ENCODE measurements at regions of chr15 and their contacts with region 1.

Region 1: DNA sequence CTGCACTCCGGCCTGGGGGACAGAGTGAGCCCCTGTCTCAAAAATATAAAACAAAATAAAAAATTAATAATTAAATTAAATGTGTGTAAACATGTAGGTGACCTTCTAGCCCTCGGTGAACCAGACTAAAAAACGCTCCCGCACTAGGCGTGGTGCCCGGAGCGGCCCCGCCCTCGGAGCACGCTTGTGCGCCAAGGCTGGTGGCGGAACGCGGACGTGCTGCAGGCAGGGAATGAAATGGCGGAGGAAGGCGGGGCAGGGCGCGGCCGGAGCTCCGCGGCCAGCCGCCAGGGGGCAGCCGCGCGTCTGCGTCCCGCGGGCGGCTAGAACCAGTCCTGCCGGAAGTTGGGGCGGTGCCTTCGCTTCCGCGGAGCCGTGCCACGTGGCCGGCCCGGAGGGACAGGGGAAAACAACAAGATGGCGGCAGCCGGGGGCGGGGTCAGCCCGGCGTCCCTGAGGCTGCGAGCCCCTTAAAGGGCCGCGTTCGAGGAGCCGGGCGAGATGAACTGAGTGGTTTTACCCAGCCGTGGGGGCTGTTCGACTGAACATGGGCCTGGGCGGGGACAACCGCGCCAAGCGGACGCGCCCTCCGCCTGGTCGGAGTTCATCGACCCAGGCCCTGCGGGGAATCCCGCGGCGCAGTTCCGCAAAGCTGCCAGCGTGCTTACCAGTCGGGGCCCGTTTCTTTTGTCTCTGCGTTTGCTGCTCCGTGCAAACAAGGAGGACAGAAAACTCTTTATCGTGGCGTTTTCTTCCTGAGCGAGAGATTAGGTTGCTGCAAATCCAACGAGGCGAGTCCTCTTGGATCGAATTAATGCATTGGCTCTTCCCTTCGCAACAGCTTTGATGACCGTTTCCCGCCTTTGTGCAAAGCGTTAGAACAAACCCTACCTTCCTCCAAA is 90.9 kb upstream of the CHD2 start:
- H3K4me3 ChIP-seq: peak overlapping the region; percentile 48
- H3K27ac ChIP-seq: peak overlapping the region; percentile 97
- H3K4me1 ChIP-seq: peaks cover 28% of the 10 kb centered on the region
- CTCF ChIP-seq: peak; percentile 93; the same call in 1 of the 2 replicates

Region 2: DNA sequence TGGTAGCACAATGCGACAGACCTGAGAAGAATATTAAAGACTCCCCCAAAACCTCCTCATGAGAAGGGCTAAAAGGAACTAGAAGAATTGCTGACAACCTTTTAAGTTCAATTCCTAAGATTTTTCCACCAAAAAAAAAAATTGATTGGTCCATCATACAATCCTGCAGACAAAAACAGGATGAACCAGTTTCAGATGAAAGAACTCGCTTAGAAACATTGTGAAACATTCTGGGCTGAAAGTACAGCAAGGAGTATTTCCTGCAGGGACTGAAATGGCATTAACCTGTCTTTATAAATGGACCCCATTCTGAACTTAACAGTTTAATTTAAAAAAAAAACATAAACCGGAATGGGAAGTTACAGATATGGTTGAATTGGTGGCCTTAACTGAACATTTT is 57.7 kb before region 1 on chr15:
- CTCF ChIA-PET with region 1: no interaction called
- POLR2A ChIA-PET with region 1: no interaction called
- H3K4me3 ChIP-seq: no peak overlapping the region
- H3K27ac ChIP-seq: no peak overlapping the region
- H3K4me1 ChIP-seq: no peaks in the 10 kb centered on the region
- CTCF ChIP-seq: no peak

Region 3: DNA sequence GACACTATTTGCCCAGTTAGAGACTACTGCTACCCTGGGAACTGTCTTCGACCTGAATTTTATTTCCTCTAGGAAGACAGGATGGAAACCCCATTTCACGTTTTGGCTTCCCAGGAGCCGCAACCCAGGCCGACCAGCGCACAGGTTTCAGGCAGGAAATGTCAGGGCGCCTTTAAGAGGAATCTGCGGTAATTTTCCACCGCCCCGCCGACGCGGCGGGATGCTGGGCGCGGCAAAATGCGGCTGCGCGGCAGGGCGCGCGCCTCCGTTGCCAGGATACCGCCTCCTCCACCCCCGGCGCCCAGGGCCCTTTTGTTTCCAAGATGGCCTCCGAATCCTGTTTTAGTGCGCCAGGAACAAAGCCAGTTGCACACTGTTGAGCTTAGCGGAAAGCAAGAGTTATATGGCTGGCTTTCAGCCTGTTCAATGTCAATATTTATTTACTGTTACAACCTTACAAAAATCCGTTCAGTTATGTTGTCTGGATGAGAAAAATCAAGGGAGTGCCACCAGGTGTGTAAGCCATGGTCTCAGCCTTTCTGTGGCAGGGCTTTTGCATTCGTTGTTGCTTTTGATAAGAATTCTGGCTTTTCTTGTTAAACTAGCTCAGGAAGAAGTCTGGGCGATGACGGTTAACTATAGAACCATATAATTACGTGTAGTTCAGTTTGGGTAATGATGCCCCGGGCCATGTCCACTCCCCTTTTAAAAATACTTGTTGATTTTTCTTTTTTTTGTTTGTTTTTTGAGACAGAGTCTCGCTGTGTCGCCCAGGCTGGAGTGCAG is 11.2 kb after region 1 on chr15:
- CTCF ChIA-PET with region 1: interaction called, 35 read pairs
- POLR2A ChIA-PET with region 1: interaction called, 66 read pairs
- H3K4me3 ChIP-seq: peak overlapping the region; percentile 39
- H3K27ac ChIP-seq: peak overlapping the region; percentile 98
- H3K4me1 ChIP-seq: peaks cover 40% of the 10 kb centered on the region
- CTCF ChIP-seq: no peak

Region 4: DNA sequence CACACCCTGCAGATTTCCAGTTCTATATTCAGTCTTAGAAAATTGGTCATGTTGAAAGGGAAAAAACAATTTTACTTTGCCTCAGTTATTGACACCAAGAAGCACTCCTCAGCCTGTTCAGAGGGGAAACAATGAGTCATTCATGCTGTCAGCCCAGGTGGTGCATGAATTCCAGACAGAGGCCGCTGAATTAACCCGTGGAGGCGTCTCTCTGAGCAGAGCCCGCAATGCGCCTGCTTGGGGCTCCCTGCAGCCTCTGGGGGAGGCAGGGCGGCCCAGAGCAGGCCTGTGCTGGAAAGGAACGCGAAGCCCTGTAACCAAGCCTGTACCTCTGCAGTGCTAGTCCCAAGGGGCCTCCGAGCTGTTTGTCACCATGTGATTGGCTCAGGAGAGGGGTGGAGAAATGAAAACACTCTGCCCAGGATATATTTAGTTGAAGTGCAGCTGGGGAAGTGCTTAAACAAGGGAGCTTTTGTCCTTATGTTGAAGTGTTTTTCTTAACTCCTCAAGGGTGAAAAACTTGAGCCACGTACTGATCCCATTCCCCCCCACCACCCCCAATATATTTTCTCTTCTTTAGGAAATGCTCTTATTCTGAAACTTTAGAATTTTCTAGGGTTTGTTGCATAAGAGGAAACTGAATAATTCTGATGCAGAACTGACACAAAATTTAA is 22.6 kb after region 1 on chr15:
- CTCF ChIA-PET with region 1: interaction called, 6 read pairs
- POLR2A ChIA-PET with region 1: interaction called, 61 read pairs
- H3K4me3 ChIP-seq: peak overlapping the region; percentile 4
- H3K27ac ChIP-seq: peak overlapping the region; percentile 89
- H3K4me1 ChIP-seq: peaks cover 29% of the 10 kb centered on the region
- CTCF ChIP-seq: no peak

Region 5: DNA sequence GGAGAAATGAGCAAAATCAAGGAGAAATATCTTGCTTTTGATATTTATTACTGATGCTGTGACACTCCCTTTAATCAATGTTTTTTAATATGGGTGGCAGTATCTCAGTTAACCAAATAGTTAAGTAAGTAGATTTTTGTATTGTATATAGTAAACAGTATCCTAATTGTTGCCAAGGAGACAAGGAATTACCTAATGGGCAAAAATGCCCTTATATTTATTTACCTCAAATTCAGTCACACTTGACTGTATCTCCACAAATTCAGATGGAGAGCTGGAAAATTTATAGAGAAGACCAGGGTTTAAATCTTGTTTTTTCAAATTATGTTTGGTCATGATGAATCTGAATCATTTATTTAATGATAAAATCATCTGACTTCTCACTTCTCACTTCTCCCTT is 87.3 kb after region 1 on chr15:
- CTCF ChIA-PET with region 1: interaction called, 17 read pairs
- POLR2A ChIA-PET with region 1: interaction called, 130 read pairs
- H3K4me3 ChIP-seq: no peak overlapping the region
- H3K27ac ChIP-seq: no peak overlapping the region
- H3K4me1 ChIP-seq: peaks cover 2% of the 10 kb centered on the region; the same call in 1 of the 2 replicates
- CTCF ChIP-seq: no peak

Region 6: DNA sequence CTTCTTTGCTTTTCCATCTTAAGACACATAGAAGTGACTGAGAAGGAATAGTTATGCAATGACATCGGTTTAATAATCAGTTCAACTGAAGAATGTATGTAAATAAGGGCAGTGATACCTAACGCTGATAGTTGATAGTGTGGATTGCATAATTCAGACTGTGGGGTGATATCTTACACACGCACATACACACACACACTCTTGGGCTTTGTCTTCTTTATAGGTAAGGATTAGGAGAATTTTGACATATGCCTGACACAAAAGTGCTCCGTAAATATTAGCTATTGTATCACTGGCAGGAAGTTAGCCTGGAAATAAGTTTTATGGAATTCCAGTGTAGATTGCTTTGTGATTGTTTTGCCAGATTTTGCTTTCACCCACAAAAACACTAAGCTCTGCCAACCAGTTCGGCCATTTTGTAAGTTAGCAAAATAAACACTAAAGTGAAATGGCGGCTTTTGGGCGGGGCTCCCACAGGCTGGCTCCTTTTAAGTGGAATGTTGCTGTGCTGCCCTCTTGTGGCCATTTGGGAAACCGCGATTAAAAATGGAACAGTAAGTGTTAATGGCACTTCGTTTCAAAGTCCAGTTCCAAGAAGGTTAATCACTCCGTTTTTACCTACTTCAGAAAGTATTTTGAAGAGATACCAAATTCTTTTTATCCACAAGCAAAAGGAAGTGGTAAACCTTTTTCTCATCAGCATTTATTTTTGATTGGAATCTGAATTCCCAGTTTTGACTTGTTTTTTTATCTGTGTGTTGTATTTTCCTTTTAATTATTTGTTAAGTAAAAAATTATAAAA is 108.6 kb after region 1 on chr15:
- CTCF ChIA-PET with region 1: interaction called, 46 read pairs
- POLR2A ChIA-PET with region 1: interaction called, 18 read pairs
- H3K4me3 ChIP-seq: no peak overlapping the region; the same call in 1 of the 2 replicates
- H3K27ac ChIP-seq: peak overlapping the region; percentile 88
- H3K4me1 ChIP-seq: peaks cover 48% of the 10 kb centered on the region
- CTCF ChIP-seq: peak; percentile 76; the same call in 1 of the 2 replicates

Region 7: DNA sequence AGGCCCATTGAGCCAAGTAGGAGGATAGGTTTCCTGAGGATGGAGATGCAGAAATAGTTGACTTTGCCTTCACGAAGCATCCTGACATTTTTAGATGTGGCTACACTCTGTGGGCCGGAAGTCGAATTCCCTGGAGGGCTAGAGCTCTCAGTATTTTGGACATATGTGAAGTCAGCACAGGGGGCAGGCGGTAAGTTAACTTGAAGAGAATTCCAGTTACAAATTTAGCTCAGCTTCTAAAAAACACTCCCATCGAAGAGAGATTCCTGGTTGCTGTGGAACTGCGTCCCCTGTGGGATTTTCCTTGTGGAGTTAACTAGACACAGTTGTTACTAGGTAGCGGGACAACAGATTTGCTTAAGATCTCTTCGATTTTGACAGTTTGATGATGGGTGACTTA is 441.7 kb after region 1 on chr15:
- CTCF ChIA-PET with region 1: no interaction called
- POLR2A ChIA-PET with region 1: no interaction called
- H3K4me3 ChIP-seq: no peak overlapping the region
- H3K27ac ChIP-seq: no peak overlapping the region
- H3K4me1 ChIP-seq: no peaks in the 10 kb centered on the region
- CTCF ChIP-seq: no peak

Measured in HEK293 (cell line).